Transverse colon (tissue), 4 donors: ENCODE measurements at regions of chr5 and their contacts with region 1.

Region 1: GRCh38 chr5:40010436-40010835 is 585.7 kb upstream of the DAB2 start:
- DNase-seq: no peak
- H3K4me3 ChIP-seq: no peak overlapping the region
- H3K27ac ChIP-seq: no peak overlapping the region
- H3K4me1 ChIP-seq: no peaks in the 10 kb centered on the region
- H3K27me3 ChIP-seq: no peaks in the 10 kb centered on the region
- CTCF ChIP-seq: no peak
- EP300 ChIP-seq: no peak
- POLR2A ChIP-seq: no peak

Region 2: GRCh38 chr5:40037713-40038112 is 27.3 kb after region 1 on chr5:
- in situ Hi-C with region 1: no loop called
- intact Hi-C with region 1: loop called (anchors 2 kb)
- DNase-seq: no peak
- H3K4me3 ChIP-seq: no peak overlapping the region
- H3K27ac ChIP-seq: peak overlapping the region in 1 of 4 donors; percentile 8
- H3K4me1 ChIP-seq: peaks cover 0 to 9% (median 0%) of the 10 kb centered on the region in 4 donors
- H3K27me3 ChIP-seq: no peaks in the 10 kb centered on the region
- CTCF ChIP-seq: peak in 2 of 5 experiments; percentile 6 to 18
- EP300 ChIP-seq: no peak
- POLR2A ChIP-seq: no peak